Mammary epithelial cell (primary cell): ENCODE measurements at regions of chr11 and their contacts with region 1.

Region 1: GRCh38 chr11:73965076-73965860 is 14.4 kb downstream of the DNAJB13 start:
- DNase-seq: no peak
- H3K4me3 ChIP-seq: no peak overlapping the region
- H3K27ac ChIP-seq: no peak overlapping the region
- H3K4me1 ChIP-seq: no peaks in the 10 kb centered on the region
- H3K27me3 ChIP-seq: no peaks in the 10 kb centered on the region
- CTCF ChIP-seq: no peak

Region 2: GRCh38 chr11:74024261-74025029 is 59.2 kb after region 1 on chr11:
- CTCF ChIA-PET with region 1: interaction called, 25 read pairs
- dilution Hi-C with region 1: no loop called
- in situ Hi-C with region 1: no loop called
- intact Hi-C with region 1: no loop called
- DNase-seq: peak; percentile 62
- H3K4me3 ChIP-seq: no peak overlapping the region
- H3K27ac ChIP-seq: peak overlapping the region; percentile 16
- H3K4me1 ChIP-seq: peaks cover 38% of the 10 kb centered on the region
- H3K27me3 ChIP-seq: no peaks in the 10 kb centered on the region
- CTCF ChIP-seq: no peak

Region 3: GRCh38 chr11:74090701-74091100 is 125.4 kb after region 1 on chr11:
- CTCF ChIA-PET with region 1: no interaction called
- dilution Hi-C with region 1: no loop called
- in situ Hi-C with region 1: no loop called
- intact Hi-C with region 1: loop called (anchors 1 kb)
- DNase-seq: no peak
- H3K4me3 ChIP-seq: no peak overlapping the region
- H3K27ac ChIP-seq: no peak overlapping the region
- H3K4me1 ChIP-seq: no peaks in the 10 kb centered on the region
- H3K27me3 ChIP-seq: no peaks in the 10 kb centered on the region
- CTCF ChIP-seq: peak in 1 of 2 donors; percentile 7

Region 4: GRCh38 chr11:74170694-74171629 is 205.7 kb after region 1 on chr11 and contains the starts of genes C2CD3 and PPME1:
- CTCF ChIA-PET with region 1: no interaction called
- dilution Hi-C with region 1: no loop called
- in situ Hi-C with region 1: no loop called
- intact Hi-C with region 1: loop called (anchors 1 kb)
- DNase-seq: peak; percentile 100
- H3K4me3 ChIP-seq: peak within 1 kb of the TSS; percentile 91 to 95 (median 94)
- H3K27ac ChIP-seq: peak within 1 kb of the TSS; percentile 88
- H3K4me1 ChIP-seq: peaks cover 9% of the 10 kb centered on the region
- H3K27me3 ChIP-seq: no peaks in the 10 kb centered on the region
- CTCF ChIP-seq: peak in 1 of 2 donors; percentile 42
- total RNA-seq, gene C2CD3: 17.8 to 19.6 TPM
- total RNA-seq, gene PPME1: 32.8 to 58.5 TPM

Region 5: DNA sequence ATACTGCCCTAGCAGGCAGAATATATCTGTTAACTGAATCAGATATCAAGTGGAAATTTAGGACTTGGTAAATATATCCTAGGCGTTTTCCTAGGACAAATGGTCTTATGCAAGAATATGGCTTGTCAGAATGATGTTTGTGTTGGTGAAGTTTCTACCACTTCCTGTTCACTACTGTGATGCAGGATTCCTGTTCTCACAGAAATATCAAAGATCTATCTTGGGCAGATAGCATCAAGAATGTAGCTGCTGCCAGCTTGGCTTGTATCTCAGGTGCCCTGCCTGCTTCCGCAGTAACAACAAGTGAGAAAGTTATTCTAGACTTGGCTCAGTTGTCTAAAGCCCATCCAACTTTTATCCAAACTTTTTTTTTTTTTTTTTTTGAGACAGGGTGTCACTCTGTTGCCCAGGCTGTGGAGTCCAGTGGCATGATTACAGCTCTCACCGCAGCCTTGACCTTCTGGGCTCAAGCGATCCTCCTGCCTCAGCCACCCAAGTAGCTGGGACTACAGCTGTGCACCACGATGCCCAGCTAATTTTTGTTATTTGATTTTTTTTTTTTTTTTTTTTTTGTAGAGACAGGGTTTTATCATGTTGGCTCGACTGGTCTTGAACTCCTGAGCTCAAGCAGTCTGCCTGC is 267.2 kb after region 1 on chr11:
- CTCF ChIA-PET with region 1: no interaction called
- dilution Hi-C with region 1: no loop called
- in situ Hi-C with region 1: loop called in 1 of 2 experiments (anchors 25 kb)
- intact Hi-C with region 1: loop called (anchors 5 kb)
- DNase-seq: no peak
- H3K4me3 ChIP-seq: no peak overlapping the region
- H3K27ac ChIP-seq: no peak overlapping the region
- H3K4me1 ChIP-seq: no peaks in the 10 kb centered on the region
- H3K27me3 ChIP-seq: no peaks in the 10 kb centered on the region
- CTCF ChIP-seq: no peak

Region 6: DNA sequence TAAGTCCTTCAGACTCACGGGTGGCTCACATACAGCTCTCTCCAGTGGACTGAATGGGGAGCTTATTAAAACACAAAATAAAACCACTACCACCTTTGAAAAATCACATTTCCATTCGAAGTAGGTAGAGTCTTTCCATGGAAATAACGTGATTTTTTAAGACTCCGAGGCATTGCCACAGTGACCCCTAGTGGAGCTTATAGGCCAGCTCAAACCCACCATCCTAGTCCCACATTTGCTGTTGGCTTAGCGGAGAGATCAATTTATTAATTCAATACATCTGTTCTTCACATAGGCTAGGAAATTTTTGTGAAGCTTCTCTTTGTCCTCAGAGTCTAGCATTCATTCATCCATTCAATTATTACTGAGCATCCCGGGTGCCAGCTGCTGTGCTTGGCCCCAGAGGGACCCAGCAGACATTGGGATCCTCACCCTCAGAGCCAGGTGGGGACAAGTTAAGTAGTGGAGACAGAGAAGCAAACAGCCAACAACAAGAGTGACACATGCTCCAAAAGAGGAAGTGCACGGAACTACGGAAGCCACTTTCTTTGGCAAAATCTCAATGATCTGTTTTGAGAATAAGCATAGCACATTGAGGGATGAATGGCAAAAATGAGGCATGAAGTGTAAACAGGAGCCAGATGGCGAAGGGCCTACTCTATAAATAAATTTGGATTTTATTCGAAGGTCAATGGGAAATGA is 356.4 kb after region 1 on chr11:
- CTCF ChIA-PET with region 1: no interaction called
- dilution Hi-C with region 1: no loop called
- in situ Hi-C with region 1: no loop called
- intact Hi-C with region 1: loop called (anchors 1 kb)
- DNase-seq: peak; percentile 8
- H3K4me3 ChIP-seq: no peak overlapping the region
- H3K27ac ChIP-seq: no peak overlapping the region
- H3K4me1 ChIP-seq: peaks cover 17% of the 10 kb centered on the region
- H3K27me3 ChIP-seq: no peaks in the 10 kb centered on the region
- CTCF ChIP-seq: peak; percentile 75 to 78

Region 7: GRCh38 chr11:74449369-74449931 is 484.2 kb after region 1 on chr11:
- CTCF ChIA-PET with region 1: interaction called, 3 read pairs
- dilution Hi-C with region 1: no loop called
- in situ Hi-C with region 1: no loop called
- intact Hi-C with region 1: loop called (anchors 1 kb)
- DNase-seq: peak; percentile 60
- H3K4me3 ChIP-seq: no peak overlapping the region
- H3K27ac ChIP-seq: no peak overlapping the region
- H3K4me1 ChIP-seq: no peaks in the 10 kb centered on the region
- H3K27me3 ChIP-seq: no peaks in the 10 kb centered on the region
- CTCF ChIP-seq: peak; percentile 67 to 74